H1 (cell line): ENCODE measurements at regions of chr18 and their contacts with region 1.

Region 1: GRCh38 chr18:69958422-69958821 is 10.7 kb upstream of the CD226 start:
- DNase-seq: no peak
- H3K4me3 ChIP-seq: no peak overlapping the region
- H3K27ac ChIP-seq: no peak overlapping the region
- H3K4me1 ChIP-seq: 0 out of 7 replicates have a peak, but pooled peaks cover 0 to 2% (median 0%) of the 10 kb centered on the region in 4 experiments
- H3K27me3 ChIP-seq: no peaks in the 10 kb centered on the region
- CTCF ChIP-seq: no peak
- EP300 ChIP-seq: no peak
- POLR2A ChIP-seq: no peak
- RAD21 ChIP-seq: no peak

Region 2: GRCh38 chr18:69916412-69916811 is 42.0 kb before region 1 on chr18:
- CTCF ChIA-PET with region 1: interaction called, 12 read pairs
- POLR2A ChIA-PET with region 1: no interaction called
- DNase-seq: no peak
- H3K4me3 ChIP-seq: no peak overlapping the region
- H3K27ac ChIP-seq: no peak overlapping the region
- H3K4me1 ChIP-seq: no peaks in the 10 kb centered on the region
- H3K27me3 ChIP-seq: no peaks in the 10 kb centered on the region
- CTCF ChIP-seq: no peak
- EP300 ChIP-seq: no peak
- POLR2A ChIP-seq: no peak
- RAD21 ChIP-seq: no peak